ENCODE measurements at regions of chr1 and their contacts with region 1.

Region 1: GRCh38 chr1:151459331-151460046 is at the start of gene POGZ:
- DNase-seq: peak; percentile 99
- H3K4me3 ChIP-seq: peak within 1 kb of the TSS; percentile 78 to 94 (median 82)
- H3K27ac ChIP-seq: peak within 1 kb of the TSS; percentile 93 to 99 (median 98)
- H3K4me1 ChIP-seq: peaks cover 0 to 36% (median 34%) of the 10 kb centered on the region in 4 donors
- H3K27me3 ChIP-seq: no peaks in the 10 kb centered on the region
- CTCF ChIP-seq: no peak
- EP300 ChIP-seq: peak in 2 of 4 donors; percentile 26 to 40
- POLR2A ChIP-seq: peak in 1 of 2 donors; percentile 9
- total RNA-seq, gene POGZ: 40.6 to 75.3 (median 46.4) TPM

Region 2: GRCh38 chr1:151281969-151282882 is 177.3 kb before region 1 on chr1 and contains the start of gene ZNF687:
- intact Hi-C with region 1: loop called (anchors 5 kb)
- DNase-seq: peak; percentile 100
- H3K4me3 ChIP-seq: peak within 1 kb of the TSS; percentile 73 to 84 (median 80)
- H3K27ac ChIP-seq: peak within 1 kb of the TSS; percentile 97 to 99 (median 98)
- H3K4me1 ChIP-seq: peaks cover 2 to 22% (median 21%) of the 10 kb centered on the region in 4 donors
- H3K27me3 ChIP-seq: no peaks in the 10 kb centered on the region
- CTCF ChIP-seq: no peak
- EP300 ChIP-seq: no peak
- POLR2A ChIP-seq: peak; percentile 60 to 86
- total RNA-seq, gene ZNF687: 17.6 to 24.2 (median 18.3) TPM

Region 3: GRCh38 chr1:151372061-151372934 is 87.2 kb before region 1 on chr1 and contains the start of gene SELENBP1:
- intact Hi-C with region 1: no loop called
- DNase-seq: peak; percentile 96
- H3K4me3 ChIP-seq: peak within 1 kb of the TSS; percentile 46 to 54 (median 48)
- H3K27ac ChIP-seq: peak within 1 kb of the TSS; percentile 81 to 89 (median 86)
- H3K4me1 ChIP-seq: peaks cover 0 to 48% (median 37%) of the 10 kb centered on the region in 4 donors
- H3K27me3 ChIP-seq: no peaks in the 10 kb centered on the region
- CTCF ChIP-seq: no peak
- EP300 ChIP-seq: no peak
- POLR2A ChIP-seq: peak; percentile 71 to 95
- total RNA-seq, gene SELENBP1: 95.8 to 142 (median 127) TPM

Region 4: DNA sequence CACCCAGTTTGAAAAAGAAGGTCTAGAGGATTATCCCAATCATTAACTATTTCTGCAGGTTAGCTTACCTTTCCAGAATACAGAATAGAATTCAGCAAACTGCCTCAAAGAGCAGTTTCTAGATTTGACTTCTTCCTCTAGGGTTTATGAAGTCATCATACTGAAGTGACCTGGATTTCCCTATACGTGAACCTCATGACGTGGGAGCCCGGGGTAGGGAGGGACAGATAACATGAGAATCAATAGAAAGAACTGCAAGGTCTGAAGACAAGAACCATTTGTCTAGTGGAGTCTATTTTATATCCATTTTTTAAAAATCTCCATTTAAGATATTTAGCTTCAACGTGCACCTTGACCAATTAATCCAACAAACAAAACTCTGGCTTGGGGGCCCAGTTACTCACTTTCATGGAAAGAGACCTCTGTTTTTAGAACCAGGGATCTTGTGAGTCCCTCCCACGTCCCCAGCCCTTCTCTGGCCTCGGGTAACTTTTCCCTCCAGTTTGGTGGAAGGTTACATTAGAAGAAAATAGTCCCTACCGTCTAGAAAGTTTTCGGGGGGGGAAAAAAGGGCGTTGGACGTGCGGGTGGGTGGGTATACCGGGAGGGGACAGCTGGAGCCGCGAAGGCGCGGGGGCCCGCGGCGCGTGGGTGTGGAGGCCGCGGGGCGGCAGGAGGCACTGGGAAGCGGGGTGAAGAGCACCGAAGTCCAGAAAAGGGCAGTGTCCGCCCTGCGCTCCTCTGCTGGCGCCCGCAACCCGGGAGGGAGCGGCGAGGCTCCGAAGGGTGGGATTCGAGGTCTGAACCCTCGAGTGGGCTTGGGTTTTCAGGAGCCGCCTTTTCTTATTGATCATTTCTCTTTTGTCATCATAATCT is 13.6 kb after region 1 on chr1:
- intact Hi-C with region 1: loop called (anchors 1 kb)
- DNase-seq: peak; percentile 75
- H3K4me3 ChIP-seq: peak overlapping the region; percentile 50 to 63 (median 61)
- H3K27ac ChIP-seq: peak overlapping the region; percentile 81 to 83 (median 82)
- H3K4me1 ChIP-seq: peaks cover 0 to 5% (median 2%) of the 10 kb centered on the region in 4 donors
- H3K27me3 ChIP-seq: no peaks in the 10 kb centered on the region
- CTCF ChIP-seq: no peak
- EP300 ChIP-seq: no peak
- POLR2A ChIP-seq: no peak

Region 5: DNA sequence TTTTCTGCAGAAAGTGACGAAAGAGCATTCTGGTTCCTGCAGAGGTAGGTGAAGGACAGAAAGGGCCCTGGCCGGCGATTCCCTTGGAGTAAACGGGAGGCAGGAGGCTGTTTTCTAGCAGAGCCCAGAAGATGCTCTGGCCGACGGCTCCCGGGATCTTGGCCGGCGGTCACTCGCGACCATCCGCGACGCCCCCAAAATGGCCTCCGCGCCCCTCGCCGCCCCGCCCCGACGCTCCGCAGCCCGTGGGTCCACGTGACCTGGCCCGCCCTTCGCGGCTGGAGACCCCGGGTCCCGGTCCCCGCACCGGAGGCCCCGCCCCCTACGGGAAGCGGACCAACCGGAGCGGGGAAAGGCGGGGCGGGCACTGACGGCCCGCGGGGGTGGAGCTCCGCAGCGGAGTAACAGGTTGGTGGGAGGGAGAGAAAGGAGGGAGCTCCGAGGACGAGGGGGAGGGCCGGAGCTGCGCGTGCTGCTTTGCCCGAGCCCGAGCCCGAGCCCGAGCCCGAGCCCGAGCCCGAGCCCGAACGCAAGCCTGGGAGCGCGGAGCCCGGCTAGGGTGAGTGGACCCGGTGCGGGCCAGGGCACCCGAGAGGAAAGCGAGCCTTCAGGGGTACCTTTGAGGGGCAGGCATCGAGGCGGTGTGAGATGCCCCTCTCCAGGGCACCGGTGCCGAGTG is 51.6 kb after region 1 on chr1 and contains the start of gene CGN:
- intact Hi-C with region 1: loop called (anchors 5 kb)
- DNase-seq: peak; percentile 92
- H3K4me3 ChIP-seq: peak within 1 kb of the TSS; percentile 54 to 73 (median 63)
- H3K27ac ChIP-seq: peak within 1 kb of the TSS; percentile 59 to 84 (median 82)
- H3K4me1 ChIP-seq: peaks cover 0 to 17% (median 12%) of the 10 kb centered on the region in 4 donors
- H3K27me3 ChIP-seq: no peaks in the 10 kb centered on the region
- CTCF ChIP-seq: no peak
- EP300 ChIP-seq: no peak
- POLR2A ChIP-seq: peak in 1 of 2 donors; percentile 46
- total RNA-seq, gene CGN: 0.33 to 1.8 (median 0.62) TPM

Region 6: DNA sequence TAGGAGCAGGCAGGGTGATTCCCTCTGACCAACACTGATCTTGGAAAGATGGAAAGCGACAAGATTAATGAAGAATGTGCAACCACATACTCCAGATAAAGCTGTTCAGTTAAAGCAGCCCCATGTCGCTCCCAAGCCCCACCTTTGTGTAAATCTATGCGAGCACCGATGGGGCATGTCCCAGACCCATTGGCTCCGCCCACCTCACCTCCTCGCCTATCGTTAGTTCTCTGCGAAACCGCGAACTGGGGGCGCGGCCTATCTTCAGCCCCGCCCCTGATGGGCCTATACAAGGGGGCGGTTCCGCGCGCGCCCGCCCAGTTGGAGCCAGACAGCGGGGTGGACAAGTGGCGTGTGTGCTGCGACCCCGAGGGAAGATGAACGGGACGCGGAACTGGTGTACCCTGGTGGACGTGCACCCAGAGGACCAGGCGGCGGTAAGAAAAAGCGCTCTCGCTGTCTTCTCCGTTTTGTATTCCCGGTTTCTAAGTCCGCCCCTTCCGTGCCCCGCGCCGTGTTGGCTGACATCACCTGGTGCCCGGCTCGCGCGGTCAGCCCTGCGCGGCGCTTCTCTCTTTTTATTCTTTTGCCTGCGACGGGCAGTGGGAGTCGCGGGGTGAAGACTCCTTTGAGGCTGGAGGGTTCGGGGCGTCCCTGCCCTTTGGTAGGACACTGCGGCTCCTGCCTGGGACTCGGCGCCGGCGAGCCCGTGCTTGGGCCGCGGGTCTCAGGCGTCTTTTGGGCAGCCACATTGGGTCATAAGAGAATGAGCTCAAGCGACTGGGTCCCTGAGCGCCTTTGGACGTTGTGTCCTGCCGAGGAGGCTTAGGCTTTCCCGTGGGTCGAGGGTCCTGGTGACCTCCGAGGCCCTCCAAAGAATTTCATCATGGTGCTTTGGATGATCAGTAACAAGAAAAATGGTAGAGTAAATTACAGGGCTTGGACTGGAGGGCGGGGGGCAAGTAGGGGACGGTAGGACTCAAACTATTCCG is 80.8 kb after region 1 on chr1 and contains the start of gene TUFT1:
- intact Hi-C with region 1: loop called (anchors 5 kb)
- DNase-seq: peak; percentile 96
- H3K4me3 ChIP-seq: peak within 1 kb of the TSS; percentile 57 to 82 (median 70)
- H3K27ac ChIP-seq: peak within 1 kb of the TSS; percentile 84 to 89 (median 86)
- H3K4me1 ChIP-seq: peaks cover 0 to 36% (median 35%) of the 10 kb centered on the region in 4 donors
- H3K27me3 ChIP-seq: no peaks in the 10 kb centered on the region
- CTCF ChIP-seq: no peak
- EP300 ChIP-seq: no peak
- POLR2A ChIP-seq: peak; percentile 91 to 93
- total RNA-seq, gene TUFT1: 8.0 to 13.4 (median 11.5) TPM

Measured in sigmoid colon (tissue), 7 donors.